Aorta (tissue), 5 donors: ENCODE measurements at regions of chr3 and their contacts with region 1.

Region 1: GRCh38 chr3:42101048-42101447 is 9.9 kb downstream of the TRAK1 start:
- DNase-seq: peak in 1 of 2 donors; percentile 79
- ATAC-seq: peak; percentile 87
- H3K4me3 ChIP-seq: no peak overlapping the region
- H3K27ac ChIP-seq: no peak overlapping the region
- H3K4me1 ChIP-seq: no peaks in the 10 kb centered on the region
- H3K27me3 ChIP-seq: no peaks in the 10 kb centered on the region

Region 2: DNA sequence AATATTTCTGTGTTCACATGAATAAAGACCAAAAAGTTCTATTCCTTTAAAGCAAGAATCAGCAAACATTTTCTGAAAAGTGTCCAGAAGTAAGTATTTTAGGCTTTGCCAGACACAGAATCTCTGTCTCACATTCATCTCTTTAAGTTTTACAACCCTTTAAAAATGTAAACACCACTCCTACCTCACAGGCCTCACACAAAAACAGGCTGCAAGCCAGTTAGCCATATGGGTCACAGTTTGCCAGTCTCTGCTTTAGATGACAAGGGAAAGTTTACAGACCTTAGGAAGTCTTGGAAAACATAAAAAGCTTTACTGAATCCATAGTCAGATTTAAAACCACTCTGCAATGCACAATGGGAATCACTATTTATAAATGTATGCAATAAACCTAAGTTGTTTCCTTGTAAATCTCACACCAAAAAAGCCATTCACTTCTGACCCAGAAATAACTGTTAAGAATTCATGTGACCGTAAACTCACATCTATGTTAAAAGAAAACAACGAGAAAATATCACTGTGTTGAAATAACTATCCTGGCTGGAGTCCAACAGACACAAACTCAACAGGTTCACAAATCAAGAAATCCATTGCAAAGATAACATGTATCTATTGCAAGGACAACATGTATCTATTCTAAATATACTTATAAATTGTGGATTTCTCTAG is 447.3 kb before region 1 on chr3:
- intact Hi-C with region 1: no loop called
- DNase-seq: no peak
- ATAC-seq: no peak
- H3K4me3 ChIP-seq: no peak overlapping the region
- H3K27ac ChIP-seq: no peak overlapping the region
- H3K4me1 ChIP-seq: no peaks in the 10 kb centered on the region
- H3K27me3 ChIP-seq: no peaks in the 10 kb centered on the region

Region 3: GRCh38 chr3:41893977-41894376 is 207.1 kb before region 1 on chr3:
- intact Hi-C with region 1: loop called (anchors 2 to 5 kb)
- DNase-seq: no peak
- ATAC-seq: no peak
- H3K4me3 ChIP-seq: no peak overlapping the region
- H3K27ac ChIP-seq: no peak overlapping the region
- H3K4me1 ChIP-seq: no peaks in the 10 kb centered on the region
- H3K27me3 ChIP-seq: no peaks in the 10 kb centered on the region

Region 4: GRCh38 chr3:41900265-41900664 is 200.8 kb before region 1 on chr3:
- intact Hi-C with region 1: loop called (anchors 2 to 5 kb)
- DNase-seq: no peak
- ATAC-seq: no peak
- H3K4me3 ChIP-seq: no peak overlapping the region
- H3K27ac ChIP-seq: no peak overlapping the region
- H3K4me1 ChIP-seq: no peaks in the 10 kb centered on the region
- H3K27me3 ChIP-seq: no peaks in the 10 kb centered on the region

Region 5: DNA sequence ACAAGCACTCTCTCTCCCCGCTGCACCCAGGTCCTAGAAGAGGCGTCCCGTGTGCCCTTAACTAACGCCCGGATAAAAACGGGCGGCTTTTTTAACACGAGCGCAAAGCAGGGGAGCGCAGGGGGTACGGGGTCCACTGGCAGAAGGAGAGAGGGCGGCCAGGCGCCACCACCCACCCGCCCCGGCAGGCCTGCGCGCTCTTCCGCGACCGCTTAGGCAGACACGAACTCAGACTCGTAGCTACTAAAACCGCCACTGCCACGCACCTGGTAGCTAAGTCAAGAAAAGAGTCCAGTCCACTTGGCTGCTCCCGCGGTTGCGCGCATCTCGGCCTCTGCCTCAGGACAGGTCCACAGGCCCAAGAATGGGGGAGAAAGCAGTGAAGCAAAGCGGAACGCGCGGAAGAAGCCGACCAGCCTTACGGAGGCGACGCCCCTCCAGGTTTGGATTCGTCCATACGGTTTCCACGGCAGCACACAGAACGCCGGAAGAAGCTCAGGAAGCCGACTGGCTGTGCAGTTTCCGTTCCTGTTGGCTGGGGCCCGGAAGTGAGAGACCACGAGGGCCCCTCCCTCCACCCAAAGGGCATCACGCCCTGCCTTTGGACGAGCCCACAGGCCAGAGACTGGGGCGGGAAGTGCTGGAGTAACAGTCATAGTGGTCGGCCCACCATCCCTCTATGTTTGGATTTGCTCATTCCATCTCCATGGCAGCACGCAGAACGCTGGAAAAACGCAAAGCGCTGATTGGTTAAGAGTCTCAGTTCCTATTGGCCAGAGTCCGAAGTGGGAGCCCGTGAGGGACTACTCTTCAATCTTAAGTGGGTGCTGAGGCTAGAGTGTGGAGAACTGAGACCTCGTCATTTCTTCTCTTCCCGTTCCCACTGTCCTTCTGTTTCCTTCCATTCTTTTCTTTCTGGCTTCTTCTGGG is 139.0 kb before region 1 on chr3 and contains the start of gene ULK4:
- intact Hi-C with region 1: loop called (anchors 2 kb)
- DNase-seq: peak; percentile 98 to 99
- ATAC-seq: peak; percentile 98
- H3K4me3 ChIP-seq: peak within 1 kb of the TSS; percentile 65 to 66
- H3K27ac ChIP-seq: peak within 1 kb of the TSS; percentile 20 to 91
- H3K4me1 ChIP-seq: no peaks in the 10 kb centered on the region
- H3K27me3 ChIP-seq: no peaks in the 10 kb centered on the region
- total RNA-seq, gene ULK4: 10.1 to 15.2 TPM

Region 6: DNA sequence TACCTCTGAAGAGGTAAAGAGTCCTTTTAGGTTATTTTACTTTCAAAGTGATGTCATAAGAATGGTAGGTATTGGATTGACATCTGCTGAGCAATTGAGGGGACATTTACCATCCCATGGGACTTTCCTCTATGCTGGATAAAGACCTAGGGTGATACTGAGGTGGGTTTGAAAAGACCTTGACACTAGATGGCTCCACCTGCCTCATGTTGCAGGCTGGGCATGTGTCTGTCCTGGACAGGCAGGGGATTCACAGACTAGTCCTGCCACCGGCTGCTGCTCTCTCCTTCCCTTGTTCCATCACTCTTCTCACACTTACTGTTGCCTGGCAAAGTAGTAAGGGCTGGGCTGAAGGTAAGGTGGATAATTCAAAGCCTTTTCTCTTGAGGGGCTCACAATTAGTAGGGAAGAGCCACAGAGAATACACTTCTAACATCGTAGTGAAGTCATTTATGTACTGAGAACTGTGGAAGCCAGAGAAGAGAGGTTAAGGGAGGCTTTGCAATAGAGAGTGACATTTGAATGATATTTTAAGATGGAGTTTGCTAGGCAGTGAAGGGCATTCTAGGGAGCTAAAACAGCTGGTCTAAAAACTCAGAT is 17.8 kb after region 1 on chr3:
- intact Hi-C with region 1: no loop called
- DNase-seq: no peak
- ATAC-seq: no peak
- H3K4me3 ChIP-seq: no peak overlapping the region
- H3K27ac ChIP-seq: no peak overlapping the region
- H3K4me1 ChIP-seq: no peaks in the 10 kb centered on the region
- H3K27me3 ChIP-seq: no peaks in the 10 kb centered on the region